Caco-2 (cell line): ENCODE measurements at regions of chr2 and their contacts with region 1.

Region 1: DNA sequence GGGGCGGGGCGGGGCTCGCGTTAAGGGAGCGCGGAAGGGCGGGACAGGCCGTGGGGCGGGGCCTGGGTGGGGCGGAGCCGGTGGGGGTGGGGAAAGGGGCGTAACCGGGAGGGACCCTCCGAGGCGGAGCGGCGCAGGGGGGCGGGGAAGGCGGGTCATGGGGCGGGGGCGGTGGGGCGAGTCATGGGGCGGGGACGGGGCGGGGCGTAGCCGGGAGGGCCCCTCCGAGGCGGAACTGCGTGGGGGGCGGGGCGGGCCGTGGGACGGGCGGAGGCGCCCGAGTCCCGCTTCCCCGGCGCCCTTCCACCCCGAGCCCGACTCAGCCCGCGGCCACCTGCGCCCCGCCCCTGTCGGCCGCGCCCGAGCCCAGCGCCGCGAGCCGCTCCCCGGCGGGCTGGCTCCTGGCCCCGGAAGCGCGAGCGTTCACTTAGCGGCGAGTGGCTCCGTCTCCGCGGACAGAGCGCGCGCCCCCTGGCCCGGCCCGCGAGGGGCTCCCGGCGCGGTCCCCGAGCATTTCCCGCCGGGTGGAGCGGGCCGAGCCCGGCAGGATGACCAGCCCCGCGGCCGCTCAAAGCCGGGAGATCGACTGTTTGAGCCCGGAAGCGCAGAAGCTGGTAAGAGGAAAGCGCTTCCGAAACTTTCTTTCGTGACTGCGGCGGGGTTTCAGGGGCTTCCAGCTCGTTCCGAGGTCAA is 64.7 kb downstream of the LRRFIP1 start:
- DNase-seq: peak; percentile 87 to 90
- H3K4me3 ChIP-seq: peak overlapping the region; percentile 81
- H3K4me3 Mint-ChIP-seq: peak overlapping the region; percentile 72
- H3K27ac Mint-ChIP-seq: peak overlapping the region; percentile 45
- H3K4me1 ChIP-seq: peaks cover 19% of the 10 kb centered on the region; the same call in 1 of the 2 replicates
- H3K4me1 Mint-ChIP-seq: peaks cover 19% of the 10 kb centered on the region
- H3K27me3 ChIP-seq: no peaks in the 10 kb centered on the region
- H3K27me3 Mint-ChIP-seq: no peaks in the 10 kb centered on the region
- CTCF ChIP-seq: no peak

Region 2: GRCh38 chr2:237590272-237591140 is 101.5 kb before region 1 on chr2 and contains the start of gene RAB17:
- CTCF ChIA-PET with region 1: interaction called, 4 read pairs
- POLR2A ChIA-PET with region 1: no interaction called
- intact Hi-C with region 1: loop called (anchors 10 kb)
- DNase-seq: peak; percentile 87 to 91
- H3K4me3 ChIP-seq: peak within 1 kb of the TSS; percentile 36
- H3K4me3 Mint-ChIP-seq: peak within 1 kb of the TSS; percentile 88
- H3K27ac Mint-ChIP-seq: peak within 1 kb of the TSS; percentile 95
- H3K4me1 ChIP-seq: peaks cover 33% of the 10 kb centered on the region
- H3K4me1 Mint-ChIP-seq: peaks cover 18% of the 10 kb centered on the region
- H3K27me3 ChIP-seq: no peaks in the 10 kb centered on the region
- H3K27me3 Mint-ChIP-seq: no peaks in the 10 kb centered on the region
- CTCF ChIP-seq: no peak
- total RNA-seq, gene RAB17: 60.9 and 61.5 TPM in 2 replicates

Region 3: DNA sequence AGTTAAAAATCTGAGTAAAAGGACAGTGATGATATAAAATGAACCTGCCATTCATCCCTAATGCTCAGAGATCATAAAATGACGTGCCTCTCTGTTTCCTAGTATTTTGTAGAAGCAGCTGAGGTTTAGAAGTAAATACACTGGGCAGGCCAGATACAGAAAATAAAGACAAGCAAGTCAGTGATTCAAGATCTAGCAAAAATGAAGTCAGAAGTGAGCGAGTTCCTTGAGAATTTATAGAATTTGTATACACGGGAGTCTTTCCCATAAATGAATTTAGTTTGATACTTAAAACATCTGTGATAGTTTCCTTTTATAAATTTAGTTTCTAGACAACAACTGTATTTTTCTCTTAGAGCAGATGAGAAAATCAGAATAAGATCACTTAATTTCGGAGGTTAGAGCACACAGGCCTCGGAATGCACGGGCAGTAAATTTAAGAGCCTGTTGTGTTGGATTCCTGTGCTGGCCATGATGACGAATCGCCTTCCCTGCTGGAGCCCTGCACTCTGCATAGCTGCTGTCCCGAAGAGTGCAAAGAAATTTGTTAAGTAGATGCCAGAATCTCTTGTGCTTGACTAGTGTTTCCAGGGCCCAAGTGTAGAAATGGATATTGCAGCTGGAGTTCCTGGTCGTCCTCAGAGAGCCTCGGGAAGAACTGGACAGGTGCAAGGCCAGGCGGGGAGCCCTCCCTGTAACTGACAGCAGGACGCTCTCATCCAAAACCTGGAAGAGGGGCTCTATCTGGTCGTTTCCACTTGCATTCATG is 22.8 kb after region 1 on chr2:
- CTCF ChIA-PET with region 1: interaction called, 5 read pairs
- POLR2A ChIA-PET with region 1: interaction called, 7 read pairs
- intact Hi-C with region 1: loop called (anchors 2 kb)
- DNase-seq: peak; percentile 32 to 52
- H3K4me3 ChIP-seq: peak overlapping the region; percentile 43
- H3K4me3 Mint-ChIP-seq: peak overlapping the region; percentile 78
- H3K27ac Mint-ChIP-seq: peak overlapping the region; percentile 84
- H3K4me1 ChIP-seq: peaks cover 19% of the 10 kb centered on the region; the same call in 1 of the 2 replicates
- H3K4me1 Mint-ChIP-seq: peaks cover 19% of the 10 kb centered on the region
- H3K27me3 ChIP-seq: no peaks in the 10 kb centered on the region
- H3K27me3 Mint-ChIP-seq: no peaks in the 10 kb centered on the region
- CTCF ChIP-seq: no peak